HepG2 (cell line): ENCODE measurements at regions of chr16 and their contacts with region 1.

Region 1: GRCh38 chr16:8179615-8180014 is 410.7 kb downstream of the TMEM114 start:
- DNase-seq: no peak
- ATAC-seq: peak; percentile 60
- H3K4me3 ChIP-seq: no peak overlapping the region
- H3K27ac ChIP-seq: no peak overlapping the region
- H3K4me1 ChIP-seq: peaks cover 7% of the 10 kb centered on the region
- H3K27me3 ChIP-seq: peaks cover 4 to 15% of the 10 kb centered on the region in 2 experiments; a peak in 4 of 5 replicates
- CTCF ChIP-seq: no peak
- EP300 ChIP-seq: no peak
- POLR2A ChIP-seq: no peak
- RAD21 ChIP-seq: no peak

Region 2: DNA sequence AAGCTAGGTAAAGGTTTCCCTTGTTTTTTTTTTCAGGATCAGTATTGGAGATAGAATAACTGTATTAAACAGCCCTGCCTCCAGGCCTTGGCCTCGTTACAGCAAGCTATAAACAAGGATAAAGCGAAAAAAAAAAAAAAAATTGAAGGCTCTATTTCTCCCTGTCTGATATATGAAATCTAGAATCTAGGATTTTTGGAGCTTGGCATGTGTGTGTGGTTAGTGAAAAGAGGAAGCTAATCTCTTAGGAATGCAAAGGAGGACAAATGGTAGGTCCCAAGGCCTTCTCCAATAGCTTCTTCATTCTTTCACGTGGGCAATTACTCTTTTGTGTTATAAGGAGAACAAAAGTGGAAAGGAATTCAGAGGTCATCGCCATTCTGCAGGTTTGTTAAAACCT is 59.6 kb before region 1 on chr16:
- CTCF ChIA-PET with region 1: no interaction called
- POLR2A ChIA-PET with region 1: no interaction called
- in situ Hi-C with region 1: no loop called
- intact Hi-C with region 1: no loop called
- DNase-seq: no peak
- ATAC-seq: no peak
- H3K4me3 ChIP-seq: no peak overlapping the region
- H3K27ac ChIP-seq: no peak overlapping the region
- H3K4me1 ChIP-seq: no peaks in the 10 kb centered on the region
- H3K27me3 ChIP-seq: no peaks in the 10 kb centered on the region
- CTCF ChIP-seq: no peak
- EP300 ChIP-seq: no peak
- POLR2A ChIP-seq: no peak
- RAD21 ChIP-seq: no peak

Region 3: DNA sequence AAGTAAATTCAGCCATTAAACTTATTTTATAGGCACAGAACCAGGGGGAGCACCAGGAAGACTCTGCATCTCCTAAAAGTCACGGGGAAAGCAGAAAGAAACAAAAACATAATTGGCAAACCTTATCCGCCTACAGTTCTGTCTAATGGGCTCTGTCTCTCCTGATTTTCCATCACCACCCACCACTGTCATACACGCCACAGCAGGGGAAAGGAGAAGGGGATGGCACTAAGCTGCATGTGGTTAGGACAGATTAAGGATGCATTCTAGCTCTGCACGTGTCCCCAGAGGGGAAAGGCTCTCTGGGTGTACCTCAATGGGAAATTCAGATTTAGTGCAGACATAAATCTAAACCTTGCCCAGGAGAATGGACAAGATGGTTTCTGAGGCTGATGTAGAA is 50.9 kb after region 1 on chr16:
- CTCF ChIA-PET with region 1: no interaction called
- POLR2A ChIA-PET with region 1: no interaction called
- in situ Hi-C with region 1: no loop called
- intact Hi-C with region 1: no loop called
- DNase-seq: no peak
- ATAC-seq: no peak
- H3K4me3 ChIP-seq: no peak overlapping the region
- H3K27ac ChIP-seq: no peak overlapping the region
- H3K4me1 ChIP-seq: no peaks in the 10 kb centered on the region
- H3K27me3 ChIP-seq: no peaks in the 10 kb centered on the region
- CTCF ChIP-seq: no peak
- EP300 ChIP-seq: no peak
- POLR2A ChIP-seq: no peak
- RAD21 ChIP-seq: no peak

Region 4: GRCh38 chr16:8241408-8241807 is 61.8 kb after region 1 on chr16:
- CTCF ChIA-PET with region 1: no interaction called
- POLR2A ChIA-PET with region 1: no interaction called
- in situ Hi-C with region 1: no loop called
- intact Hi-C with region 1: loop called (anchors 10 kb)
- DNase-seq: no peak
- ATAC-seq: no peak
- H3K4me3 ChIP-seq: no peak overlapping the region
- H3K27ac ChIP-seq: no peak overlapping the region
- H3K4me1 ChIP-seq: peaks cover 14% of the 10 kb centered on the region
- H3K27me3 ChIP-seq: no peaks in the 10 kb centered on the region; a peak in 2 of 5 replicates
- CTCF ChIP-seq: no peak
- EP300 ChIP-seq: no peak
- POLR2A ChIP-seq: no peak
- RAD21 ChIP-seq: no peak